Motor neuron (in vitro differentiated cells): ENCODE measurements at regions of chr9 and their contacts with region 1.

Region 1: GRCh38 chr9:124532897-124533296 is 25.7 kb upstream of the NR5A1 start:
- ATAC-seq: no peak
- H3K4me3 ChIP-seq: no peak overlapping the region
- H3K27ac ChIP-seq: no peak overlapping the region
- H3K4me1 ChIP-seq: peaks cover 0 to 4% of the 10 kb centered on the region in 2 donors

Region 2: DNA sequence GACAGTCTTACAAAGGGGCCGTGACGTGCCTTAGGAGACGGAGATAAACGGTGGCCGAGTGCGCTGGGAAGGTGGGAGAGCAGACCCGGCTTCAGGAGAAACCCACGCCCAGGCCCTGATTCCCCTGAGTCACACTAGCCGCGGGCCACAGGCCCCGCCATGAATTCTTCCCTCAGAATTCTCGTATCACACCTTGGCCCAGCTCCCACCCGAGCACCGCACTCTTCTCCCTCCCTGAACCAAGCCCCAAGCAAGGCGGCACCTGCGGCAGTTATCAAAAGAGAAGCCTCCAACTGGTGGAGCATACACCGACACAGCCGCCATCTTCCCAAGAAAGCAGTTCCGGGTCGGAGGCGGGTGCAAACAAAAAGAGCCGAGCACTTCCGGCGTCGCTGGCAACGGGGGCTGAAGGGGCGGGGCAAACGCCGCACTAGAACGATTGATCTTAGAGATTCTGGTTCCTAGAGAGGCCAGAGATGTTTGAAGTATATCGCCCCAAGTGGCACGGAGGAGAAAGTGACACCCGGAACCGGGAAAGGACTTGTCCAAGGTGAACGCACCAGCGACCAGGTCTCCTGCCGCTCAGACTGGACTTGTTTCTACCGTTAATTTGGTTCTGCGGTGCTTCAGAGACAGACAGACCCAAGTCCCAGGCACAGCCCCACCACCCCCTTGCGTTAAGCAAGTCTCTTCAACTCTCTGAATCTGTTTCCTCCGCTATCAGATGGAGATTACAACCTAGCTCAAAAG is 117.6 kb before region 1 on chr9 and contains the start of gene PSMB7:
- in situ Hi-C with region 1: loop called in 5 of 9 experiments (anchors 10 to 25 kb)
- ATAC-seq: peak; percentile 85 to 94 (median 90)
- H3K4me3 ChIP-seq: peak within 1 kb of the TSS; percentile 56 to 98 (median 67)
- H3K27ac ChIP-seq: peak within 1 kb of the TSS; percentile 80 to 85
- H3K4me1 ChIP-seq: peaks cover 4 to 6% of the 10 kb centered on the region in 2 donors
- total RNA-seq, gene PSMB7: 169 to 289 (median 207) TPM

Region 3: DNA sequence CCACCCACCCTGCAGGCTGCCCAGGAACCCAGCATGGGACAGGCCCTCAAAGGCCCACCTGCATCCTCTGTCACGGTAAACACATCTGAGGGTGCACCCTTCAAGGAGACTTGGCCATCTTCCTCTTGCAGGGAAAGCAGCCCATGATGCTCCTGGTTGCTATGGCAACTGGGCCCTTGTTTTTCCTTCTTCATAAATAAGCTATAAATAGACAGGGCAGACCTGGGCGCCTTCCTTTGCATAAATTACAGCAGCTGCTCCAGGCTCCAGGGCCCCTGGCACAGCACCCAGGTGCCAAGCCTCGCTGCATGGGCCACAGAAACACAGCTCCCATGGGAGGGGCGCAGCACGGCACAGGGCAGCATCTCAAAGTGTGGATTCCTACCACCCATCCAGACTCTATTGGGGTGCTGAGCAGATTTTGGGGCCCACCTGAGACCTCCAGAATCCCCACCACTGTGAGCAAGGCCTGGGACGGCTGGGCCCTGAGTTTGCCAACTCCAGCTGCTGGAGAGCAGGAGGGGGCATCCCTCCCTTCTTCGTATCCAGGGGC is 111.8 kb before region 1 on chr9:
- in situ Hi-C with region 1: loop called in 6 of 9 experiments (anchors 10 to 25 kb)
- ATAC-seq: peak in 6 of 8 experiments; percentile 59 to 75 (median 70)
- H3K4me3 ChIP-seq: no peak overlapping the region
- H3K27ac ChIP-seq: no peak overlapping the region
- H3K4me1 ChIP-seq: peaks cover 9% of the 10 kb centered on the region in 2 donors

Region 4: DNA sequence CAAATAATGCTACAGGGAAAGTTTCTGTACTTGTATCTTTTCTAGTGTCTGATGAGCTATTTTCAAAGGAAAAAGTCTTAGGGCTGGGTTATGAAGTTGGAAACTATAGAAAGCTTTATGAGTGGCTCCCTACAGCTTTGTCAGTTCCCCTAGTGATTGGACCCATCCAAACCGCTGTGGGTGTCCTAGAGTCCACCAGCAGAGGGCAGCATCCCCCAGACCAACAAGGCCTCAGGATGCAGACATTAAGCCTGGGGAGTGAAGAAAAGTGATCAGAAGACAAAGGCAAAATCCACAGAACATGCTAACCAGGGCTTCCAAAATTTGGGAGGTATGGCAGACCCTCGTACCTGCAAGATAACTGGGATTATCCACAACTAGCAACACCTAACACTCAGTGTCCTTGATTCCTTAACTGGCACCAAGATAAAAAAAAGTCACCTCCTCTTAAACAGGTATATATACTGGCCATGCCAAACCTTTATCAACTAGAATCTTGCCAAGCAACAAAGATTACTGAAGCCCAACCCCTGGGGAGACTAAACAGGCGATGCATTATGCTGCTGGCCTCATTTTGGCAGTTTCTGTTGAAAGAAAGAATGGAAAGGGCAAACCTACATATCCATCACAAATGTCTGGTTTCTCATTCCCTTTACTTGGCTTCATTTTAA is 84.7 kb after region 1 on chr9:
- in situ Hi-C with region 1: no loop called
- ATAC-seq: peak; percentile 94 to 98 (median 98)
- H3K4me3 ChIP-seq: no peak overlapping the region
- H3K27ac ChIP-seq: no peak overlapping the region
- H3K4me1 ChIP-seq: peaks cover 6 to 7% of the 10 kb centered on the region in 2 donors